ENCODE measurements at regions of chr10 and their contacts with region 1.

Region 1: DNA sequence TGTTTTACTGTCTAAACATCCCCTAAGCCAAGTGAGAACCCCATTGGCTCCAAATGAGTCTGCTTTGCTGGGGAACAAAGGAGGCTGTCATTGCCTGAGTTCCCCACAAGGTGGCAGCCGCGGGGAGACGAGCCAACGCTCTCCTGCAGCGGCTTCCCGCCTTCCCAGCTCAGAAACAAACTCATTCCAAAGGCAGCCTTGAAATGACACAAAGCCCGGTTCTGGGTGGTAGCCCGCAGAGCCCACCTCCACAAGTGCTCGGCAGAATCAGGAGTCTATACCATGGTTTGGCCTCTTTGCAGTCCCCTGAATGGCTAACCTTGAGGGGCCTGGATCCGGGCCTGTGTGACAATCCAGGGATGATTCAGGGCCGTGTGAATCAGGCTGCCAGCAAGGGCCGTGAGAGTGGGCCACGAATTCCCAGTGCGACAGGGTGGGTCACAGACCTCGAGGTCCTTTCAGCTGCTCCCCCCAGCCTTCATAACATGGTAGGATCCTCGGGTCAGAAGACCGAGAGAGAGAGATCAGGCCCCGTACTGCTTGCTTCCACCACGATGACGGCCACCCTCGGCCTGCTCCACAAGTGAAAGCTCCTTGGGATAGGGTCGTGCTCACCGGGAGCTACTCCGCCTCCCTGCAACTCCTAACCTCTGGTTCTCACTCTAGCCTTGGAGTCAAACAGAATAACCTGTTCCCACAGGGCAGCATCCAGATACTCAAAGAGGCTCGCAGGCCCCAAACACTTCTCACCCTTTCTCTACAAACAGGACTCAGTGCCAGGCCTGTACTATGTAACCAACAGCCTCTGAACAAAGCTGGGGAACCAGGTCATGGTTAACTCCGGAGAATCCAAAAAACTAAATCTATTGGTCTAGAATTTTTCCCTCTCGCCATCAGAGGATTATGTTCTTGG is 79.6 kb downstream of the DLG5 start:
- DNase-seq: peak; percentile 86
- ATAC-seq: peak; percentile 60
- H3K4me3 Mint-ChIP-seq: no peak overlapping the region
- H3K27ac Mint-ChIP-seq: peak overlapping the region; percentile 84
- H3K4me1 Mint-ChIP-seq: peaks cover 64% of the 10 kb centered on the region
- H3K27me3 Mint-ChIP-seq: no peaks in the 10 kb centered on the region
- CTCF ChIP-seq: peak; percentile 96

Region 2: DNA sequence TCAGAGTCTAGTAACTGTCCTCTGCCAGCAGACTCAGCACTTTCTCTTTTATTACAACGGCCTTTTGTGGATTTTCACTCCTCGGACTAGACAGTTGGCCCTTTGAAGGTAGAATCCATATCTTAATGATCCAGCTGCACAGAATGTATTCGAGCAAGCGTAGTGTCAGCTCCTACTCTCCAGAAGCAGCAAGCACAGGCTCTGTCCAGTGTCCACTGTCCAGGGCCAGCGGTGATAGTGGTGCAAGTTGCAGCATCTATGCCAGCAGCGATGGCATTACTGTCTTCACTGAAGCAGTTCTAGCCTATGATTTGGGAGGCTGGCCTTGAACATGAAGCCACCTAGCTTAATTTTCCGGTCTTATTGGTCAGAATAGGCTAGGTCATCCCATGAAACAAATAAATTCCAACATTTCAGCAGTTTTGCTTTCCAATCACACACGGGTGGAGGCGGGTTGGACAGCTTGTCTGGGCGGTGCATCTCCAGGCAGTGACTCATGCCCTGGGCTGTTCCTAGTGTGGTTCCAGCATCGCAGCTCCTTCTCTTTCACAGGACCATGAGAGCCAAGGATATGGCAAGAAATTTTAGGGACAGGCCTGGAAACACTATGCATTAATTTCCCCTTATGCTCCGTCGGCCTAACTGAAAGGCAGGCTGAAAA is 100.8 kb before region 1 on chr10:
- CTCF ChIA-PET with region 1: no interaction called
- POLR2A ChIA-PET with region 1: no interaction called
- DNase-seq: no peak
- ATAC-seq: no peak
- H3K4me3 Mint-ChIP-seq: no peak overlapping the region
- H3K27ac Mint-ChIP-seq: no peak overlapping the region
- H3K4me1 Mint-ChIP-seq: no peaks in the 10 kb centered on the region
- H3K27me3 Mint-ChIP-seq: no peaks in the 10 kb centered on the region
- CTCF ChIP-seq: no peak

Region 3: GRCh38 chr10:77865629-77866360 is 18.8 kb after region 1 on chr10:
- CTCF ChIA-PET with region 1: interaction called, 20 read pairs
- POLR2A ChIA-PET with region 1: no interaction called
- DNase-seq: peak; percentile 44
- ATAC-seq: peak; percentile 77
- H3K4me3 Mint-ChIP-seq: 0 out of 2 replicates have a peak overlapping the region, but pooled peaks have one; percentile 19
- H3K27ac Mint-ChIP-seq: peak overlapping the region; percentile 59
- H3K4me1 Mint-ChIP-seq: peaks cover 66% of the 10 kb centered on the region
- H3K27me3 Mint-ChIP-seq: no peaks in the 10 kb centered on the region
- CTCF ChIP-seq: no peak

Region 4: DNA sequence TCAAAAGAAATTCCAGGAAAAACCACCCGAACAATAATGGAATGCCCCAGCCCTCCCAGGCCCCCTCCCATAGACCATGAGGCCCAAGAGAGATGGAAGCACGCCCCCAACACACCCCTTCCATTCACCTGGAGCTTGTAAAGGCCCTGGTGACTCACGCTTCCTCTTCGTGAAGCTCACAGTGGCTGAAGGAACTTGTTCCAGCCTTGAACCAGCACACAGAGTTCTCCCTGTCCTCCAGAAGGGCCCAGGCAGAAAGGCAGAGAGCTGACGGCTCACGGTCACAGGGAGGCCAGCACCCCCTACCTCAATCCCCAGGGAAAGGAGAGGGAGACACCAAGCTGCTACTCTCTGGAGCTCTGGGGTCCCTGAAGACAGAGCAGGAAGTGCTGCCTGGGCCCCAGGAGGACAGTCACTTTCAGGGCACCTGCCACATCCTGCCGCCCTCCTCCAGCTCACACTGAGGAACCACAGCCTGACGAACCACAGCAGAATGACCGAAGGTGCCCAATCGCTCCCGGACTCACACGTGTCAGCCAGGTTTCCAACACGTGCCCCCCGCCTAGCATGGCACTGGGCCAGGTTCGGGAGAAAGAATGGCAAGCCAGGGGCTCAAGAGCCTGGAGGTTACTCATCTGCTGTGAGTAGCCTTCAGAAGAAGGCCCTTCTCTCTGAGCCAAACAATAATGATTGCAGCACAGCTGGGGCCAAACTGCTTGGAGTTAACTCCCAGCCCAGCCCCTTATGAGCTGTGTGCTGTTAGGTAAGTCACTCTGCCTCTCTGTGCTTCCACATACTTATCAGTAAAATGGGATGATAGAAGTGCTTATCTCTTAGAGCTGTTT is 26.8 kb after region 1 on chr10:
- CTCF ChIA-PET with region 1: interaction called, 21 read pairs
- POLR2A ChIA-PET with region 1: no interaction called
- DNase-seq: no peak
- ATAC-seq: no peak
- H3K4me3 Mint-ChIP-seq: no peak overlapping the region
- H3K27ac Mint-ChIP-seq: peak overlapping the region; percentile 90
- H3K4me1 Mint-ChIP-seq: peaks cover 69% of the 10 kb centered on the region
- H3K27me3 Mint-ChIP-seq: no peaks in the 10 kb centered on the region
- CTCF ChIP-seq: no peak

Region 5: DNA sequence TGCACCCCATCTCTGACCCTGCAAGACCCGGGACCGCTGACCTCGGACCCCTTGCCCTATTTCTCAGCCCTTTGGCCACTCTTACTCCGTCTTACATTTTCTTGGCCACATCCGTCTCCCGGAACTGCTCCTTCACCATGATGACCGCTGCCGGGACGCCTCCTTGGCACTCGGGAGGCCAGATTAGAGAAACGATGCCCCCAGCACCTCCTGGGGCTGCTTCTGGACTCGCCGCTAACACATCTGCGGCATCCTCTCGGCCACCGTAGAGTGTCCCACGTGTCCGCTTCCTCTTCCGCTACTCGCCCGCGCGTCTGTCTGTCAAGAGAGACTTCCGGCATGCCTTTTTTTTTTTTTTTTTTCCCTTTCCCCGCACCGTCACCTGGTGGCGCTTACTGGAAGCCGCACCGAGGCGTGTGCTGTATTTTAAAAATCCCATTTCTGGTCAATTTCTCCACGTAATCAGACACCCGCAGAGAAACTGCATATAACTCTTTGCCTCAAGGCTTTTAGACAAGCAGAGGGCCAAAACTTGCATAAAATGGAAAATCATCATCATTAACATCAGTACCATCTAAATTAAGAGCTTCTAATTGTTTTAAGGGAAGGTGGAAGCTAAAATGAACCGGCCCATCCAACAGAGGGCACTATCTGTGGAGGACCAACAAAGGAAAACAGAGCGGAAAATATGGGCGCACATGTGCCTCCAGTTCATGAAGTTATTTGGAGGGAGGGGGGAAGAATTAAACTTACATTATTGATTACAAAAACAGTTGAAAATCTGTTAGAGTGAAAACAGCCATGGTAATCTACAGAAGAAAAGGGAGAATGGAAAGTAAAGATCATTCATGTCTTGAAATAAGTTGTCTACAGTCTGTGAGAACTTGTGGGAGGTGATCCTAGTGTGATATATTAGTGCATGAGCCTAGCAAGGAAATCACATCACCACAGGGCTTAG is 182.6 kb after region 1 on chr10 and contains the start of gene POLR3A:
- CTCF ChIA-PET with region 1: interaction called, 12 read pairs
- POLR2A ChIA-PET with region 1: no interaction called
- DNase-seq: peak; percentile 90
- ATAC-seq: peak; percentile 56
- H3K4me3 Mint-ChIP-seq: peak within 1 kb of the TSS; percentile 100
- H3K27ac Mint-ChIP-seq: peak within 1 kb of the TSS; percentile 97
- H3K4me1 Mint-ChIP-seq: peaks cover 13% of the 10 kb centered on the region
- H3K27me3 Mint-ChIP-seq: no peaks in the 10 kb centered on the region
- CTCF ChIP-seq: no peak
- total RNA-seq, gene POLR3A: 27.5 to 32.2 TPM (median 27.9 TPM) in 3 replicates

Measured in WTC11 (cell line).